Natural killer cell (primary cell): ENCODE measurements at regions of chr19 and their contacts with region 1.

Region 1: GRCh38 chr19:12840091-12841079 is 2.1 kb downstream of the MAST1 start:
- DNase-seq: peak in 1 of 2 donors; percentile 49
- ATAC-seq: peak; percentile 31 to 47 (median 39)
- H3K4me3 ChIP-seq: no peak overlapping the region
- H3K4me3 Mint-ChIP-seq: no peak overlapping the region
- H3K27ac ChIP-seq: no peak overlapping the region
- H3K27ac Mint-ChIP-seq: no peak overlapping the region
- H3K4me1 ChIP-seq: peaks cover 26% of the 10 kb centered on the region
- H3K4me1 Mint-ChIP-seq: peaks cover 16 to 34% of the 10 kb centered on the region in 2 donors
- H3K27me3 ChIP-seq: peaks cover 58% of the 10 kb centered on the region
- H3K27me3 Mint-ChIP-seq: peaks cover 48 to 54% of the 10 kb centered on the region in 2 donors
- CTCF ChIP-seq: no peak

Region 2: GRCh38 chr19:12789904-12790619 is 50.3 kb before region 1 on chr19:
- intact Hi-C with region 1: no loop called
- DNase-seq: peak; percentile 94 to 95
- ATAC-seq: peak; percentile 35 to 56 (median 41)
- H3K4me3 ChIP-seq: peak overlapping the region; percentile 95
- H3K4me3 Mint-ChIP-seq: peak overlapping the region; percentile 96
- H3K27ac ChIP-seq: peak overlapping the region; percentile 93
- H3K27ac Mint-ChIP-seq: peak overlapping the region; percentile 97 to 99
- H3K4me1 ChIP-seq: peaks cover 57% of the 10 kb centered on the region
- H3K4me1 Mint-ChIP-seq: peaks cover 28 to 38% of the 10 kb centered on the region in 2 donors
- H3K27me3 ChIP-seq: no peaks in the 10 kb centered on the region
- H3K27me3 Mint-ChIP-seq: no peaks in the 10 kb centered on the region
- CTCF ChIP-seq: no peak

Region 3: DNA sequence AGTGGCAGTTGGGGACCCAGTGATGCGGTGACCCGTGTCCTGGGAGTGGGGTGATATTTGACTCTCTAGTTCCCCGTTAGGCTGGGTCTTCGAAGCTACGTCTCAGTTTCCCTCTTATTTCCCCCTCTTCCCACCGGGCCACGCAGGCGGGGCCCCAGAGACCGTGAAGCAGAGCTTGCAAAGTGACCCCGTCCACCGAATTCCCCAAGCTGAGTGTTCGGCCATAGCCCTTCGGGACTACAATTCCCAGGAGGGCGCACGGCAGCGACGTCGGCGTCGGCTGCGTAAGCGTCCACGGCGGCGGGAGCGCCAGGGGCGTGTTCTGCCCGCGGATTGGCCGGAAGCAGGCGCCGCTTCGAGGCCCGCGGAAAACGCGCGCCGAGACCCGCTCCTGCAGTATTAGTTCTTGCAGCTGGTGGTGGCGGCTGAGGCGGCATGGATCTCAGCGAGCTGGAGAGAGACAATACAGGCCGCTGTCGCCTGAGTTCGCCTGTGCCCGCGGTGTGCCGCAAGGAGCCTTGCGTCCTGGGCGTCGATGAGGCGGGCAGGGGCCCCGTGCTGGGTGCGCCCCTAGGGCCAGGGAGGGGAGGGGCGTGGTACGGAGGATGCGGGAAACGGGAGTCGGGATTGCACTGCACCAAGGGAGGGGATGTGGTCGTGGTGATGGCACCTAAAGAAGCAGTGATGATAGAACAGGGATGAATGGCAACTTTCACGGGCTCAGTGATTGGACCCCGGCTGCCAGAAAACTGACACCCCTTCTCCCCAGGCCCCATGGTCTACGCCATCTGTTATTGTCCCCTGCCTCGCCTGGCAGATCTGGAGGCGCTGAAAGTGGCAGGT is 33.9 kb before region 1 on chr19 and contains the start of gene RNASEH2A:
- intact Hi-C with region 1: loop called (anchors 5 kb)
- DNase-seq: peak; percentile 80 to 93
- ATAC-seq: peak; percentile 94 to 98 (median 96)
- H3K4me3 ChIP-seq: peak within 1 kb of the TSS; percentile 93
- H3K4me3 Mint-ChIP-seq: peak within 1 kb of the TSS; percentile 93
- H3K27ac ChIP-seq: peak within 1 kb of the TSS; percentile 72
- H3K27ac Mint-ChIP-seq: peak within 1 kb of the TSS; percentile 83 to 94
- H3K4me1 ChIP-seq: peaks cover 27% of the 10 kb centered on the region
- H3K4me1 Mint-ChIP-seq: peaks cover 17 to 26% of the 10 kb centered on the region in 2 donors
- H3K27me3 ChIP-seq: peaks cover 4% of the 10 kb centered on the region
- H3K27me3 Mint-ChIP-seq: peaks cover 0 to 5% of the 10 kb centered on the region in 2 donors
- CTCF ChIP-seq: no peak
- total RNA-seq, gene RNASEH2A: 6.6 to 8.7 (median 7.4) TPM

Region 4: DNA sequence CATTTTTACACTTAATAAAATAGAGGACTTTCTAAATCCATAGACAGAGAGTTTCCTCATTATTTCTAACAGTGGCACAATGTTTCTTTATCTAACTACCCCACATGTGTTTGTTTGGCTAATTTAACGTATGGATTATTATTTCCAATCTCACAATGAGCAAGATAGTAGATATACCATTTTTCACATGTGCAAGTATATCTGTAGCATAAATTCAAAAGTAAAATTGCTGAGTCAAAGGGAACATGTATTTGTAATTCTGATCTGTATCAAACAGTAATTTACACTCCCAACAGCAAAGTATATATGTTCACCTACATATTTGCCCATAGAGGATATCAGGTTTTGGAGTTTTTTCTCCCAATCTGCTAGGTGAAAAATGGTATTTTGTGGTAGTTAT is 16.3 kb after region 1 on chr19:
- intact Hi-C with region 1: no loop called
- DNase-seq: no peak
- ATAC-seq: no peak
- H3K4me3 ChIP-seq: no peak overlapping the region
- H3K4me3 Mint-ChIP-seq: no peak overlapping the region
- H3K27ac ChIP-seq: no peak overlapping the region
- H3K27ac Mint-ChIP-seq: no peak overlapping the region
- H3K4me1 ChIP-seq: no peaks in the 10 kb centered on the region
- H3K4me1 Mint-ChIP-seq: no peaks in the 10 kb centered on the region
- H3K27me3 ChIP-seq: no peaks in the 10 kb centered on the region
- H3K27me3 Mint-ChIP-seq: peaks cover 0 to 3% of the 10 kb centered on the region in 2 donors
- CTCF ChIP-seq: no peak